ENCODE measurements at regions of chr15 and their contacts with region 1.

Region 1: GRCh38 chr15:78898540-78898939 is 25.9 kb downstream of the MORF4L1 start:
- DNase-seq: no peak
- H3K4me3 Mint-ChIP-seq: no peak overlapping the region
- H3K27ac Mint-ChIP-seq: no peak overlapping the region
- H3K4me1 Mint-ChIP-seq: no peaks in the 10 kb centered on the region
- H3K27me3 Mint-ChIP-seq: no peaks in the 10 kb centered on the region
- CTCF ChIP-seq: no peak

Region 2: GRCh38 chr15:78347586-78348535 is 550.7 kb before region 1 on chr15:
- CTCF ChIA-PET with region 1: no interaction called
- intact Hi-C with region 1: no loop called
- DNase-seq: peak; percentile 25
- H3K4me3 Mint-ChIP-seq: no peak overlapping the region
- H3K27ac Mint-ChIP-seq: no peak overlapping the region
- H3K4me1 Mint-ChIP-seq: peaks cover 11% of the 10 kb centered on the region
- H3K27me3 Mint-ChIP-seq: peaks cover 18% of the 10 kb centered on the region
- CTCF ChIP-seq: no peak

Region 3: DNA sequence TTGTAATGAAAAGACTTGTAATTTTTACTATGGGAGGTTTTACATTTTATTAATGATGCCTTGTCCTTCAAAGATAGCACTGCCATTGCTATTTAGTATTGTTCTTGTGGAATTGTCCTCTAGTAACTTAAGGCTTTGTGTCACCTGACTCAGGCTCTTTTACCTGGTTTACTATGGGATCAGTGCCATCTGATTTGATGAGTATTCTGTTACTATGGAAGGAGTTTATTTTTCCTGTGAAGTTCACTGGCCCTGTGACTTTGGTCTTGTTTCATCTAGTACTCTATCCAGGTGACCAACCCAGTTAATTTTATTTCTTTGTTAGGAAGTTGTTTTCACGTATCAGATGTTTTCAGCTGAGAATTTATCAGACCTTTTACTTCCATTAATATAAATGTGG is 16.9 kb before region 1 on chr15:
- CTCF ChIA-PET with region 1: no interaction called
- intact Hi-C with region 1: loop called (anchors 2 kb)
- DNase-seq: no peak
- H3K4me3 Mint-ChIP-seq: peak overlapping the region; percentile 19
- H3K27ac Mint-ChIP-seq: peak overlapping the region; percentile 15
- H3K4me1 Mint-ChIP-seq: peaks cover 22% of the 10 kb centered on the region
- H3K27me3 Mint-ChIP-seq: no peaks in the 10 kb centered on the region
- CTCF ChIP-seq: no peak

Region 4: DNA sequence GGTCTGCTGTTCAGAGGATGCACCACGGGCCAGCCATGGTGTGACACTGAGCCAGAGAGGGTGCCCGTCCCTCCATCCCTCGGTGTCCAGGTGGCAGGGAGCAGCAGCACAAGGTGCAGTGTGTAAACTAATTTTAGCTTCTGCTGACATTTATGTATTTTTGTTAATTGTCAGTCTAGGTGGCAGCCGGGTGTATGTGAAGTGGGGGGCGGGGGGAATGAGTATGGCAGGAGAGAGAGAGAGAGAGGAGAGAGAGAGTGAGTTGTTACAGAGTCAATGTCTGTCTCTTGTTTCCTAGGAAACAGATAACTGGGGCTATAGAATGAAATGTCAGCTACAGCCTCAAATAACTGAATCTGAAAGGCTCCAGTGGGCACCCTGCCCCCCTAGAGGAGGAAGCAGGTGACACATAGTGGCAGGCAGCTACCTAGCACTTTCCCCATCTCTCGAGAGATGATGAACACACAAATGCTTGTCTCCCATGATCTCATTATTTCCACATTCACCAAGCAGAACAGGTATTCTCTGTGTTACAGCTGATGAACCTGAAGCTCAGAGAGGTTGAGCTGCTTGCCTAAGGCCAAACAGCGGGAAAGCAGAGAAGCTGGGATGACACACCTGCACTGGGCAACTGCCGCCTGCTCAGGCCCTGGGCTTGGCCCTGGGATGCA is 167.3 kb after region 1 on chr15:
- CTCF ChIA-PET with region 1: no interaction called
- intact Hi-C with region 1: no loop called
- DNase-seq: no peak
- H3K4me3 Mint-ChIP-seq: no peak overlapping the region
- H3K27ac Mint-ChIP-seq: no peak overlapping the region
- H3K4me1 Mint-ChIP-seq: no peaks in the 10 kb centered on the region
- H3K27me3 Mint-ChIP-seq: peaks cover 95% of the 10 kb centered on the region
- CTCF ChIP-seq: no peak